ENCODE measurements at regions of chr10 and their contacts with region 1.

Region 1: GRCh38 chr10:17290226-17290625 is 62.2 kb downstream of the VIM start:
- DNase-seq: peak in 4 of 14 experiments; percentile 8 to 45 (median 35)
- ATAC-seq: peak; percentile 66
- H3K4me3 ChIP-seq: no peak overlapping the region
- H3K4me3 Mint-ChIP-seq: no peak overlapping the region
- H3K27ac ChIP-seq: no peak overlapping the region
- H3K27ac Mint-ChIP-seq: no peak overlapping the region
- H3K4me1 ChIP-seq: no peaks in the 10 kb centered on the region
- H3K4me1 Mint-ChIP-seq: peaks cover 6% of the 10 kb centered on the region
- H3K27me3 ChIP-seq: no peaks in the 10 kb centered on the region
- H3K27me3 Mint-ChIP-seq: peaks cover 29% of the 10 kb centered on the region
- CTCF ChIP-seq: peak; percentile 34

Region 2: DNA sequence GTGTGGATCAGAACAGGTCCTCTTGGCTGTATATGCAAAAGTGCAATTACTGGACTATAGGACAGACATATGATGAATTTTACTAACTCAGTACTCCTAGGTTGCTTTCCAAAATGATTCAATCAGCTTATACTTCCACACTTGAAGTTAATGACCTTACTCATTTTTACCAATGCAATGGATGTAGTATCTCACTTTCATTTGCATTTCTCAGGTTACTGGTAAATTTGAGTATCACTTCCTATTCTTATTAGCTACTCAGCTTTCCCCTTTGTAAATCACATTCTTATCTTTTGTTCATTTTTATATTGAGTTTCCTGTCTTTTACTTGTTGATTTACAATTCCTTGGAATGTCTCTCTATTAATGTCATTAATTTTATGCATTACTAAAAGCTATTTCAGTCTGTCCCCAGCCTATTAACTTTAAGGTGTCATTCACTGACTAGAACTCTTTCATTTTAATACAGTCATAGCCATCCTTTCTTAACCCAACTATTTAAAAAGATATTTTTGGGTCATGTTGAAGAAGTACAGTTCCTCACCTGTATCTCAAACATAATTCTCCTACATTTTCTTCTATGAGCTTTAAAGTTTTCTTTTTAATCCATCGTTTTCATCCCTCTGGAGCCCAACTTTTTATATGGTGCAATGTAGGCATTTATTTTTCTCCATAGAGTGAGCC is 26.4 kb after region 1 on chr10:
- CTCF ChIA-PET with region 1: no interaction called
- POLR2A ChIA-PET with region 1: no interaction called
- intact Hi-C with region 1: loop called in 1 of 2 experiments (anchors 1 kb)
- DNase-seq: no peak
- ATAC-seq: no peak
- H3K4me3 ChIP-seq: no peak overlapping the region
- H3K4me3 Mint-ChIP-seq: no peak overlapping the region
- H3K27ac ChIP-seq: no peak overlapping the region
- H3K27ac Mint-ChIP-seq: no peak overlapping the region
- H3K4me1 ChIP-seq: no peaks in the 10 kb centered on the region
- H3K4me1 Mint-ChIP-seq: no peaks in the 10 kb centered on the region
- H3K27me3 ChIP-seq: no peaks in the 10 kb centered on the region
- H3K27me3 Mint-ChIP-seq: peaks cover 15% of the 10 kb centered on the region
- CTCF ChIP-seq: no peak

Measured in CD4-positive, alpha-beta T cell (primary cell).